Breast epithelium (tissue), 4 donors: ENCODE measurements at regions of chr1 and their contacts with region 1.

Region 1: GRCh38 chr1:68157416-68157815 is 74.9 kb downstream of the WLS start:
- DNase-seq: no peak
- H3K4me3 ChIP-seq: no peak overlapping the region
- H3K27ac ChIP-seq: no peak overlapping the region
- H3K4me1 ChIP-seq: no peaks in the 10 kb centered on the region
- H3K27me3 ChIP-seq: no peaks in the 10 kb centered on the region
- CTCF ChIP-seq: no peak
- POLR2A ChIP-seq: no peak

Region 2: GRCh38 chr1:66598670-66599069 is 1558.7 kb before region 1 on chr1:
- intact Hi-C with region 1: no loop called
- DNase-seq: no peak
- H3K4me3 ChIP-seq: no peak overlapping the region
- H3K27ac ChIP-seq: no peak overlapping the region
- H3K4me1 ChIP-seq: no peaks in the 10 kb centered on the region
- H3K27me3 ChIP-seq: no peaks in the 10 kb centered on the region
- CTCF ChIP-seq: no peak
- POLR2A ChIP-seq: no peak

Region 3: GRCh38 chr1:68213843-68214242 is 56.4 kb after region 1 on chr1:
- intact Hi-C with region 1: loop called (anchors 2 kb)
- DNase-seq: peak; percentile 67 to 78
- H3K4me3 ChIP-seq: no peak overlapping the region
- H3K27ac ChIP-seq: peak overlapping the region; percentile 21 to 46
- H3K4me1 ChIP-seq: peaks cover 8% of the 10 kb centered on the region in 2 donors
- H3K27me3 ChIP-seq: no peaks in the 10 kb centered on the region
- CTCF ChIP-seq: no peak
- POLR2A ChIP-seq: no peak